ENCODE measurements at regions of chr6 and their contacts with region 1.

Region 1: GRCh38 chr6:35319346-35320030 is 21.9 kb downstream of the DEF6 start:
- DNase-seq: no peak
- ATAC-seq: no peak
- H3K4me3 ChIP-seq: no peak overlapping the region
- H3K27ac ChIP-seq: no peak overlapping the region
- H3K4me1 ChIP-seq: peaks cover 0 to 20% (median 4%) of the 10 kb centered on the region in 12 donors
- H3K27me3 ChIP-seq: no peaks in the 10 kb centered on the region
- CTCF ChIP-seq: no peak
- POLR2A ChIP-seq: no peak

Region 2: DNA sequence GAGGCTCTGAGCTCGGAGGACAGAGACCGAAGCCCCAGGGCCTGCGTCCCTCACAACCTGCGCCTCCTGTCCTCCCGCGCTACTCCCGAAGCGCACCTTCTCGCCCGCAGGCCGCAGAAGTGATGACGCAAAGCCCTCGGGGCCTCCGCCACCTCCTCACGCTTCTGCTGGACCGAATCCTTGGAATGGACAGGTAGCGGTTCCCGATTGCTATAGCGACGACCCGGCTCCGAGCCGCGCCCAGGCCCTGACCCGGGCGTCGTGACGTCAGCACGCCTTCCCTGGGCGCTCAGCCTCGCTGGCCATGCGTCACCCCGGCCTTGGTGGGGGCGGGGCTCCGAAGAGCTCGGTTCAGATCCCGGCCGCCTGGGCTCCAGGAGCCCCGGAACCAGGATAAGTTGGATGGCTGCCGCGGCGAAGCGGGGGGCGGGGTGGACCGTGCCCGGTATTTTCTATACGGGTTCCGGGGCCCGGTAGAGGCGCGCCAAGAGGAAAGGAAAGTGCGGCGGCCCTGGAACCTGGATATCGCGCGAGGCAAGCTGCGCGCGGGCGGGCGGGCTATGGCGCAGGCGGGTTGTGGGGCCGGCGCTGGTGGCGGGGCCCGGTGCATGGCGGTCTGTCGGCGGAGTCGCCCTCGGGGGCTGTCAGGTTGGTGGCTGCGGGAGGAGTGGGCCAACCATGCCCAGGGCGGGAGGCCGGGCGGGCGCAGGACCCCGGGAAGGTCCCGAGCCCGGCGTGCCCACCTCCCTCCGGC is 60.1 kb before region 1 on chr6 and contains the start of gene ZNF76:
- intact Hi-C with region 1: no loop called
- DNase-seq: peak; percentile 98 to 99 (median 99)
- ATAC-seq: peak; percentile 95 to 98 (median 96)
- H3K4me3 ChIP-seq: peak within 1 kb of the TSS; percentile 63 to 99 (median 95)
- H3K27ac ChIP-seq: peak within 1 kb of the TSS; percentile 97 to 100 (median 99)
- H3K4me1 ChIP-seq: peaks cover 0 to 46% (median 32%) of the 10 kb centered on the region in 12 donors
- H3K27me3 ChIP-seq: no peaks in the 10 kb centered on the region
- CTCF ChIP-seq: no peak
- POLR2A ChIP-seq: peak in 1 of 2 donors; percentile 69
- total RNA-seq, gene ZNF76: 26.2 to 46.1 (median 33.0) TPM

Region 3: GRCh38 chr6:35287671-35288396 is 31.7 kb before region 1 on chr6:
- intact Hi-C with region 1: loop called in 1 of 10 experiments (anchors 5 kb)
- DNase-seq: no peak
- ATAC-seq: peak in 1 of 4 donors; percentile 7
- H3K4me3 ChIP-seq: no peak overlapping the region
- H3K27ac ChIP-seq: no peak overlapping the region
- H3K4me1 ChIP-seq: peaks cover 0 to 7% (median 0%) of the 10 kb centered on the region in 12 donors
- H3K27me3 ChIP-seq: no peaks in the 10 kb centered on the region
- CTCF ChIP-seq: no peak
- POLR2A ChIP-seq: no peak

Measured in heart left ventricle (tissue), 16 donors.